Dorsolateral prefrontal cortex (tissue), 120 donors: ENCODE measurements at regions of chr13 and their contacts with region 1.

Region 1: DNA sequence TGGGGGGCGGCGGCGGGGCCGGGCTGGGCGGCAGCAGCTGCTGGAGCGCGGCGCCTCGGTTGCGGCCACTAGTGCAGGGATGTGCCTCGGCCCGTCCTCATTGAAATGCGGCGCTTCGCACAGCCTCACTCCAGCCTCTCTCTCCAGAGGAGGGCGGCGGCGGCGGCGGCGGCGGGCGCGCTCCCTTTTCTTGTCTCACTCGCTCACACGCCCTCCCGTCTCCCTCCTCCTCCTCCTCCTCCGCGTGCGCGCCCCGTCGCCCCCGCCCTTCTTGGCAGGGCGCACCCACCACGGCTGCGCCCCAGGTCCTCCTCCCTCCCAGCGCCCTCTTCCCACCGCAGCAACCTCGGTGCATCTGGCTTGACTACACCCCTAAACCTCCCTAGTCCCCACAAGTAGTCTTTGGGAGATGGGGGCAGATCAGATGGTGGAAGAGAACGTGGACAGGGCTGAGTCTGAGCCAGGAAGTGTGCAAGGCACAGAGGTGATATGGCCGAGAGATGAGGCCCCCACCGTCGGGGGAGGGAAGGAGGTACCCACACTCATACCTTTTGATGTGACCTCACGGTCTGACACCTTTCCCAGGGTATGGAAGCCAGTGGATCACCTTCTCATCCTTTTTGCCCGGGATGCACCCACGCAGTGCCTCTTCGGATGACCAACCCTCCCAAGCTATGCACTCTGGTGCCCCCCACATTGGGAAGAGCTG is at the start of gene DCLK1:
- DNase-seq: peak in 9 of 10 donors; percentile 18 to 76 (median 63)
- H3K4me3 ChIP-seq: peak within 1 kb of the TSS; percentile 26 to 75 (median 57)
- H3K27ac ChIP-seq: peak within 1 kb of the TSS in 54 of 59 donors; percentile 27 to 91 (median 70)
- H3K27me3 ChIP-seq: peaks cover 0 to 11% (median 0%) of the 10 kb centered on the region in 45 donors
- CTCF ChIP-seq: no peak
- total RNA-seq, gene DCLK1: 86.8 to 303 (median 215) TPM

Region 2: DNA sequence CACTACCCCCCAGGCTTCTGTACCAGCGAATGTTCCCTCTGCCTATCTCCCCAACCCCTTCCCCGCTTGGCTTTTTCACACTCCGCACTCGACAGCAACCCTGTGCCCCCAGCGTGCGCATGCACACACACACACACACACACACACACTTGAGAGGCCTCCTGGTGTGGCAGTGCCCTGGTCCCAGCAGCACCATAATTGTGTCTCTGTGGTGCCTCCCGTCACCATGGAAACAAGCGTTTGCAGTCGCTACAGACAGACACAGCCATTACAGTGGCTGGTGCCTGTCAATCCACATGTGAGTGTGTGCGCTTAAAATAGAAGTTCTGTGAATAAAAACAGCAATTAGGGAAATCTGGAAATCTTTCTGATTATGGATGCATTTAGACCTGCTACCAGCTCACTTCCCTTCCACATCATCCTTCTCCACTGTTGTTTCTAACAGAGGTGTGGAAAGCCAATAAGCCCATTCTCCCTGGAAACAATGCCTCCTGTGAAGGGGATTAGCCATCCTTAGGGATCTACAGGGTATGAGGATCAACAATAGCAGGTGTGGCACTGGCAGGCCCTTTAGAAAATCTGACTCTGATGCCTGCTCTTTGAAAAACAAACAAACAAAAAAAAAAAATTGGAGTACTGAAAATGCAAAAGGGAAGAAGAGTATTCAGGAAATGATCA is 146.5 kb before region 1 on chr13:
- intact Hi-C with region 1: loop called in 1 of 2 experiments (anchors 10 kb)
- DNase-seq: peak in 6 of 10 donors; percentile 27 to 65 (median 54)
- H3K4me3 ChIP-seq: no peak overlapping the region
- H3K27ac ChIP-seq: peak overlapping the region in 35 of 59 donors; percentile 0 to 72 (median 39)
- H3K27me3 ChIP-seq: peaks cover 0 to 18% (median 0%) of the 10 kb centered on the region in 45 donors
- CTCF ChIP-seq: no peak

Region 3: DNA sequence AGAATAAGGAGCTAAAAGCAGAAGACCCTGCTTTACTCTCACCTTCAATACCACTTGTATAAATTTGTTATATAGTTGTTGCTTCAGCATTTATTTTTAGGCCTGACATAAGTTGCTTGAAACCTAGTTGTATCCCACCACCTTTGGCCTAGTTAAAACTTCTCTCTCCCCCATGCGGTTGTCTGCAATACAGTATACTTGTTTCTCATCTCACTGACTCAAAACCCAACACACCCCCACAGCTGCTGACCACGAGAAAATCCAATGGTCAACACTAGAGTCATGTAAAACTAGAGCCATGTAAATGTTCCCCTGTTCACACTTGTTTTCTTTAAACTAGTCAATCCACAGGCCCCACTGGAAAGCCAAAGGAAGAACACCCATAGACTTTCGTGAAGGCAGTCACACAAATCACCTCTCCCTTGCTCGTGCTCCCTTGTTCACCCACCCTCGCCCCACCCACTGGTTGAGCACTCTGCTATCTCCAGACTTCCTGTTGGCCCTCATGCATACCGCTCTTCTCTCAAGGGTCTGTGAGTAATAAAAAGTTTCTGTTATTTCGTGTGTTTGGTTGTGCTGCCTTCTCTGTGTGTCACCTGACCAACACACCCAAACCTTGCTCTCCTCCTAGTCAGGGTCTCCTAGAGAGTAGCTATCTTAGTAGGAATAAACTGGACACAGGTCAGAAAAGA is 179.2 kb after region 1 on chr13:
- intact Hi-C with region 1: no loop called
- DNase-seq: no peak
- H3K4me3 ChIP-seq: no peak overlapping the region
- H3K27ac ChIP-seq: no peak overlapping the region
- H3K27me3 ChIP-seq: no peaks in the 10 kb centered on the region
- CTCF ChIP-seq: no peak